ENCODE measurements at regions of chr1 and their contacts with region 1.

Region 1: GRCh38 chr1:162497723-162498500 is at the start of gene UHMK1:
- DNase-seq: peak; percentile 96 to 98 (median 96)
- ATAC-seq: peak; percentile 96
- H3K4me3 ChIP-seq: peak within 1 kb of the TSS; percentile 99
- H3K27ac ChIP-seq: peak within 1 kb of the TSS; percentile 93
- H3K4me1 ChIP-seq: peaks cover 4 to 17% of the 10 kb centered on the region in 2 experiments; a peak in 4 of 5 replicates
- H3K27me3 ChIP-seq: no peaks in the 10 kb centered on the region
- CTCF ChIP-seq: no peak
- EP300 ChIP-seq: no peak
- POLR2A ChIP-seq: peak; percentile 94
- RAD21 ChIP-seq: peak in 1 of 2 experiments; percentile 29; a peak in 2 of 4 replicates
- polyA plus RNA-seq, gene UHMK1: 13.1 to 20.5 TPM

Region 2: GRCh38 chr1:162056043-162056442 is 441.9 kb before region 1 on chr1:
- CTCF ChIA-PET with region 1: no interaction called
- POLR2A ChIA-PET with region 1: no interaction called
- in situ Hi-C with region 1: no loop called
- intact Hi-C with region 1: loop called (anchors 10 kb)
- DNase-seq: peak; percentile 62 to 70 (median 65)
- ATAC-seq: peak; percentile 99
- H3K4me3 ChIP-seq: no peak overlapping the region
- H3K27ac ChIP-seq: no peak overlapping the region
- H3K4me1 ChIP-seq: no peaks in the 10 kb centered on the region
- H3K27me3 ChIP-seq: peaks cover 0 to 7% of the 10 kb centered on the region in 2 experiments; a peak in 1 of 5 replicates
- CTCF ChIP-seq: peak; percentile 88 to 93 (median 88)
- EP300 ChIP-seq: no peak
- POLR2A ChIP-seq: no peak
- RAD21 ChIP-seq: peak; percentile 91 to 94

Region 3: GRCh38 chr1:162357681-162358266 is 140.1 kb before region 1 on chr1:
- CTCF ChIA-PET with region 1: no interaction called
- POLR2A ChIA-PET with region 1: no interaction called
- in situ Hi-C with region 1: no loop called
- intact Hi-C with region 1: loop called (anchors 5 kb)
- DNase-seq: peak; percentile 65 to 84 (median 72)
- ATAC-seq: peak; percentile 87
- H3K4me3 ChIP-seq: no peak overlapping the region
- H3K27ac ChIP-seq: no peak overlapping the region; the same call in 1 of the 3 replicates
- H3K4me1 ChIP-seq: peaks cover 9 to 33% of the 10 kb centered on the region in 2 experiments; a peak in 4 of 5 replicates
- H3K27me3 ChIP-seq: no peaks in the 10 kb centered on the region
- CTCF ChIP-seq: peak; percentile 74 to 89 (median 76)
- EP300 ChIP-seq: no peak
- POLR2A ChIP-seq: no peak
- RAD21 ChIP-seq: peak; percentile 74 to 88

Region 4: GRCh38 chr1:162397039-162397448 is 100.9 kb before region 1 on chr1:
- CTCF ChIA-PET with region 1: no interaction called
- POLR2A ChIA-PET with region 1: no interaction called
- in situ Hi-C with region 1: no loop called
- intact Hi-C with region 1: loop called (anchors 5 kb)
- DNase-seq: peak; percentile 51 to 87 (median 65)
- ATAC-seq: peak; percentile 87
- H3K4me3 ChIP-seq: no peak overlapping the region
- H3K27ac ChIP-seq: peak overlapping the region; percentile 14; the same call in 2 of the 3 replicates
- H3K4me1 ChIP-seq: peaks cover 11 to 31% of the 10 kb centered on the region in 2 experiments; a peak in 3 of 5 replicates
- H3K27me3 ChIP-seq: no peaks in the 10 kb centered on the region
- CTCF ChIP-seq: peak; percentile 59 to 71 (median 69)
- EP300 ChIP-seq: peak; percentile 71; the same call in 1 of the 2 replicates
- POLR2A ChIP-seq: no peak
- RAD21 ChIP-seq: peak; percentile 32 to 60

Region 5: DNA sequence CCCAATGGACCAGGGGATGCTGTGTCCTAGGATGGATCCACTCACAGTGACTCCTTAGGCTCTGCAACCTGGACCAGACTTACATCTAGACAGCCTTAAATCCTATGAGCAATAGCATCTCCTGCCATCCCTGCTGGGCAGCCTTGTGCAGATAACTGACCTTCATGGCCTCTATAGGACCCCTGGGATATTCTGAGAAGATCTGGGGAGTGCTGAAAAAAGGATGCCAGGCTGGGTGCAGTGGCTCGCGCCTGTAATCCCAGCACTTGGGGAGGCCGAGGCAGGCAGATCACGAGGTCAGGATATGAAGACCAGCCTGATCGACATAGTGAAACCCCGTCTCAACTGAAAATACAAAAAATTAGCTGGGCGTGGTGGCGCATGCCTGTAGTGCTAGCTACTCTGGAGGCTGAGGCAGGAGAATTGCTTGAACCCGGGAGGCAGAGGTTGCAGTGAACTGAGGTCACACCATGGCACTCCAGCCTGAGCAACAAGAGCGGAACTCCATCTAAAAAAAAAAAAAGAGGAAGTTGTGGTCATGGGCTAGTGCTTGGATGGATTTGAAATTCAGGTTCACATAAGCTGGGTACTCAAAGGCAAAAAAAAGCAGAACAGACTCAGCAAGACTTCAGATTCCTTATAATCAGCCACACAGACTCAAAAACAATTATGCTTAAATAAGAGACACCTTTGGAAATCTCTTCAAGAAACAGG is 75.1 kb before region 1 on chr1:
- CTCF ChIA-PET with region 1: no interaction called
- POLR2A ChIA-PET with region 1: no interaction called
- in situ Hi-C with region 1: no loop called
- intact Hi-C with region 1: loop called (anchors 5 kb)
- DNase-seq: peak in 1 of 4 experiments; percentile 62
- ATAC-seq: peak; percentile 51
- H3K4me3 ChIP-seq: no peak overlapping the region
- H3K27ac ChIP-seq: no peak overlapping the region
- H3K4me1 ChIP-seq: peaks cover 23 to 43% of the 10 kb centered on the region in 2 experiments
- H3K27me3 ChIP-seq: no peaks in the 10 kb centered on the region
- CTCF ChIP-seq: no peak
- EP300 ChIP-seq: no peak
- POLR2A ChIP-seq: no peak
- RAD21 ChIP-seq: 0 out of 4 replicates have a peak, but pooled peaks of 1 of the 2 experiments have one; percentile 6

Region 6: DNA sequence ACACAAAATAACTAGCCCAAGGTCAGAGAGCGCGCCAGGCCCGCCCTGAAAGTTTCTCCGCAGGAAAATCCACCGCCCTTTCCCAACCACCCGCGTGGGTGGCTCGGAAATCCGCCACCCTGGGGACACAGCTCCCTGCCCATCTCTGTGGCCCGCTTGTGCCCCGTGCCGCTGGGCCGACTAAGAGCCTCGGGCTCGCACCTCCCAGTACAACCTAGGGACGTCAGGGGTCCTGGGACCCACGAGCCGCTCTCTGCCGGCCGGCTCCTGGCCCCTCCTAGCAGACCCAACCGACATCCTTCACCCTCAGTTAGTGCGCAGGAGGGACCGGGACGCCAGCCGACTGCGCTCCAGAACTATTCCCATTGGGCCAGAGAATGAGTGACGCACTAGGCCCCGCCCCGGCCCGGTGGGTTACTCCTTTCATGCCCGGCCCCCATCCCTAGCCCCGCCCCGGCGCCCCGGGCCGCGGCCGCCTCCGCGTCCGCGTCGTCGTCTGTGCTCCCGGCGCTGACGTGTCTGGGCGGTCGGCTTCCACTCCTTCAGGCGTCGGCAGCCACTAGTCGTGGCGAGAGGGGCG is 63.2 kb after region 1 on chr1:
- CTCF ChIA-PET with region 1: no interaction called
- POLR2A ChIA-PET with region 1: no interaction called
- in situ Hi-C with region 1: no loop called
- intact Hi-C with region 1: loop called (anchors 2 kb)
- DNase-seq: peak; percentile 97 to 99 (median 98)
- ATAC-seq: peak; percentile 90
- H3K4me3 ChIP-seq: peak overlapping the region; percentile 84
- H3K27ac ChIP-seq: peak overlapping the region; percentile 83
- H3K4me1 ChIP-seq: peaks cover 19 to 21% of the 10 kb centered on the region in 2 experiments; a peak in 4 of 5 replicates
- H3K27me3 ChIP-seq: no peaks in the 10 kb centered on the region
- CTCF ChIP-seq: no peak
- EP300 ChIP-seq: no peak; the same call in 1 of the 2 replicates
- POLR2A ChIP-seq: peak; percentile 89
- RAD21 ChIP-seq: no peak